ENCODE measurements at regions of chrX and their contacts with region 1.

Region 1: GRCh38 chrX:56994375-56995270 is 718 bp downstream of the SPIN3 start:
- DNase-seq: no peak
- H3K4me3 ChIP-seq: no peak overlapping the region
- H3K27ac ChIP-seq: no peak overlapping the region
- H3K4me1 ChIP-seq: no peaks in the 10 kb centered on the region
- CTCF ChIP-seq: no peak

Region 2: GRCh38 chrX:56833626-56834025 is 161.0 kb before region 1 on chrX:
- CTCF ChIA-PET with region 1: no interaction called
- POLR2A ChIA-PET with region 1: no interaction called
- intact Hi-C with region 1: loop called (anchors 5 kb)
- DNase-seq: no peak
- H3K4me3 ChIP-seq: no peak overlapping the region
- H3K27ac ChIP-seq: no peak overlapping the region
- H3K4me1 ChIP-seq: no peaks in the 10 kb centered on the region
- CTCF ChIP-seq: no peak

Region 3: GRCh38 chrX:56978172-56978571 is 16.5 kb before region 1 on chrX:
- CTCF ChIA-PET with region 1: no interaction called
- POLR2A ChIA-PET with region 1: no interaction called
- intact Hi-C with region 1: no loop called
- DNase-seq: peak; percentile 52
- H3K4me3 ChIP-seq: no peak overlapping the region
- H3K27ac ChIP-seq: no peak overlapping the region
- H3K4me1 ChIP-seq: no peaks in the 10 kb centered on the region
- CTCF ChIP-seq: peak; percentile 73